ENCODE measurements at regions of chr6 and their contacts with region 1.

Region 1: DNA sequence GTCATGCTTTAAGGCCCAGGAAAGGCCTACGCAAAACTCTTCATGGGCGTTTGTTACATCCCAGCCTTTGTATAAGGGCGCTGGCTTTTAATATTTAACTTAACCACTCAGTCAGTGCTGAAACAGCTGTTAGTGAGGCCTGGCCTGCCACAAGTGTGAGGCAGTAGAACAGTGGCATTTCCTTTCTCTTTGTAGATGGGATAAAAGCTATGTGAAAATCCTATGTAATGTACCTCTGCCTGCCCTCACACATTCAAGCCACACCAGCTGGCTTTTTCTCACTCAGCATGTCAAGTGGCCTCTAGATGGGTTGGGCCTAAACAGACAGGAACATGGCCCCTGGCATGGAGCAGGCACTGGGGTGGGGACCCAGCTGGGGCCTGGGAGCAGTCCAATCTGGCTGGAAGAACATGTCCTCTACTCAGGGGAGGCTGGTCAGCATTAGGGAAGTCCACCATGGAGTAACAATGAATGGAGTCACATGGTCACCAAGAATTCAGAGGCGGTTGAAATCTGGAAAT is 20.7 kb downstream of the CGA start:
- DNase-seq: no peak
- H3K4me3 ChIP-seq: no peak overlapping the region
- H3K27ac ChIP-seq: no peak overlapping the region
- H3K4me1 ChIP-seq: no peaks in the 10 kb centered on the region
- H3K27me3 ChIP-seq: no peaks in the 10 kb centered on the region
- CTCF ChIP-seq: no peak

Region 2: DNA sequence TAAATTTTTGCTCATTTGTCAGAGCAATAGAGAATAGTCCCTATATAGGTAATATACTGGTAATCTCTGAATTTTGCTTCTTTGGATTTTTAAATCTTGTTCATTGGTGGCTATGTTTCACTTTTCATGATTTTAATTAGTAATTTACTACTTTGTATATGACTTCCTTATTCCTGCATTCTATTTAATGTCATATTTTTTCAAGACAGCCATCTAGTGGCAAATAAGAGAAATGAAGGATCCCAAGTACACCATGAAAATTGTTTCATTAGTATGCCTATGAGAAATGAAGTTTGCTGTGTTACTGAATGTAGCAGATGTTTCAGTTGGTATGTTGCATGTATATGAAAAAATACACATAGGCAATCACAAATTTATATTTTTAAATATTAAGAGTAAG is 163.6 kb after region 1 on chr6:
- CTCF ChIA-PET with region 1: no interaction called
- POLR2A ChIA-PET with region 1: no interaction called
- intact Hi-C with region 1: loop called (anchors 5 kb)
- DNase-seq: peak; percentile 38
- H3K4me3 ChIP-seq: no peak overlapping the region
- H3K27ac ChIP-seq: no peak overlapping the region
- H3K4me1 ChIP-seq: no peaks in the 10 kb centered on the region
- H3K27me3 ChIP-seq: no peaks in the 10 kb centered on the region
- CTCF ChIP-seq: peak; percentile 73

Measured in A673 (cell line).